Transverse colon (tissue), 4 donors: ENCODE measurements at regions of chr5 and their contacts with region 1.

Region 1: GRCh38 chr5:151703227-151703626 is 16.5 kb upstream of the SPARC start:
- DNase-seq: no peak
- H3K4me3 ChIP-seq: no peak overlapping the region
- H3K27ac ChIP-seq: no peak overlapping the region
- H3K4me1 ChIP-seq: peaks cover 0 to 25% (median 7%) of the 10 kb centered on the region in 4 donors
- H3K27me3 ChIP-seq: no peaks in the 10 kb centered on the region
- CTCF ChIP-seq: no peak
- EP300 ChIP-seq: no peak
- POLR2A ChIP-seq: no peak

Region 2: GRCh38 chr5:151541571-151541970 is 161.7 kb before region 1 on chr5:
- in situ Hi-C with region 1: no loop called
- intact Hi-C with region 1: no loop called
- DNase-seq: no peak
- H3K4me3 ChIP-seq: no peak overlapping the region
- H3K27ac ChIP-seq: no peak overlapping the region
- H3K4me1 ChIP-seq: no peaks in the 10 kb centered on the region
- H3K27me3 ChIP-seq: no peaks in the 10 kb centered on the region
- CTCF ChIP-seq: no peak
- EP300 ChIP-seq: no peak
- POLR2A ChIP-seq: no peak

Region 3: GRCh38 chr5:151947925-151948608 is 244.8 kb after region 1 on chr5:
- in situ Hi-C with region 1: no loop called
- intact Hi-C with region 1: loop called (anchors 10 kb)
- DNase-seq: no peak
- H3K4me3 ChIP-seq: no peak overlapping the region
- H3K27ac ChIP-seq: no peak overlapping the region
- H3K4me1 ChIP-seq: no peaks in the 10 kb centered on the region
- H3K27me3 ChIP-seq: no peaks in the 10 kb centered on the region
- CTCF ChIP-seq: no peak
- EP300 ChIP-seq: no peak
- POLR2A ChIP-seq: no peak

Region 4: DNA sequence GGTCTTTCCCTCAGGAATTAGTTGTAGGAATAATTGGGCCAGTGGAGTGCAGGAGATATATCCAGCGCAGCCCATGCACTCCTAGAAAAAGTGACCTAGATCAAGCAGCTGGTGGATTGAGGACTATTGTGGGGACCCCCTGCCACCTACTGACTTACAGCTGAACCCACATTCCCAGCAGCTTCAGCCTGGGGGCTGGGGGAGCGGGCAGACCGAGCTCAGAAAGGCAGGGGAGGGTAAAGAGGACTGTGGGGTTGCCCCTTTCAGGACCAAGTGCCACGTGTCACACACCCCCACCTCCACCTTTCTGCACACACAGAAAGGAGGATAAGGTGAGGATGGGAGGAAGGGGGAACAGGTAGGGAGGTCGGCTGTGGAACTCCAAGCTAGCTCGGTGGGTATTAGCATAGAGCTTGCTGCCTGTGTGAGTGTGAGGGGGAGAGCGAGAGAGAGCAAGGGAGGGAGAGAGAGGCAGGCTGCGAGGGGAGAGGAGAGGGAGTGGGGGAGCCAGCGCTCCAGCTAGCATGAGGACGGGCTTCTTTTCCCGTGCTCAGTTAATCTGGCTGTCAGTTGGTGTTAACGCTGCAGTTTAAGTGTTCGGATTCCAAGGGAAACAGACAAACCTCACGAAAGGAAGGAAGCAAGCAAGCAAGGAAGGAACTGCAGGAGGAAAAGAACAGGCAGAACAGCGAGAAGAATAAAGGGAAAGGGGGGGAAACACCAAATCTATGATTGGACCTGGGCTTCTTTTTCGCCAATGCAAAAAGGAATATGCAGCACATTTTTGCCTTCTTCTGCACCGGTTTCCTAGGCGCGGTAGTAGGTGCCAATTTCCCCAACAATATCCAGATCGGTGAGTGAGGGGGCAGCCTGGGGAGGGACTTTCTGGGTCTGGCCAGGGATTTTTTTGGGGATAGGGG is 1787.2 kb after region 1 on chr5 and contains the start of gene GRIA1:
- in situ Hi-C with region 1: no loop called
- intact Hi-C with region 1: no loop called
- DNase-seq: no peak
- H3K4me3 ChIP-seq: no peak within 1 kb of the TSS
- H3K27ac ChIP-seq: no peak within 1 kb of the TSS
- H3K4me1 ChIP-seq: no peaks in the 10 kb centered on the region
- H3K27me3 ChIP-seq: peaks cover 27% of the 10 kb centered on the region
- CTCF ChIP-seq: no peak
- EP300 ChIP-seq: no peak
- POLR2A ChIP-seq: no peak
- total RNA-seq, gene GRIA1: 0.48 to 1.00 TPM in 2 of 4 donors, not detected in the others